CD4-positive, alpha-beta memory T cell (primary cell): ENCODE measurements at regions of chr1 and their contacts with region 1.

Region 1: DNA sequence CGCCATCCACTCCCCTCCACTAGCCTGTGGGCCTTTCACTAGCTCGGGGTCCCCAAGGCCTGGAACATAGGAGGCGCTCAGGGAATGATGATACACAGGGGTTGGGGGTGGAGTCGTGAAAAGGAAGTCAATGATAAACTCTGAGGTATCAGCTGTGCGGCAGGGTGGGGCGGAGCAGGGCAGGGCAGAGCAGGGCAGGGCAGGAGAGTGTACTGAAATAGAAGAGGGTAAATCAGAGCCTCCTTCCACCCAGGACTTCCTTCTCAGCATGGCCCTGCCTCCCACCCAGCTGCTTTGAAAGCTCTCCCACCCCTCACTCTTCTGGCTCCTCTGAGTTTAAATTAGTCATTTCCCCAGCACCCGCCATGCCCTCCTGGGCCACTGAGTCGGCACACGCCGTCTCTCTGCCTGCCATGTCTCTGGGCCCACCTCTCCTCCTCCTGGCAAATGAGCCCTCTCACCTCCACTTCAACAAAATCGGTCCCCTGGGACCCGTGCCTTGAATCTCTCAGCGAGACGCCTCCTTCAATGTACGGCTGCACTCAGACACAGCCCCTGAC is 16.9 kb downstream of the CAPZB start:
- DNase-seq: peak; percentile 65 to 86 (median 72)
- H3K4me3 ChIP-seq: peak overlapping the region; percentile 23 to 28
- H3K4me3 Mint-ChIP-seq: peak overlapping the region; percentile 71 to 87 (median 80)
- H3K27ac ChIP-seq: peak overlapping the region; percentile 59
- H3K27ac Mint-ChIP-seq: peak overlapping the region; percentile 86 to 97 (median 95)
- H3K4me1 ChIP-seq: peaks cover 97% of the 10 kb centered on the region
- H3K4me1 Mint-ChIP-seq: peaks cover 72 to 98% (median 86%) of the 10 kb centered on the region in 4 donors
- H3K27me3 ChIP-seq: no peaks in the 10 kb centered on the region
- H3K27me3 Mint-ChIP-seq: no peaks in the 10 kb centered on the region

Region 2: GRCh38 chr1:19390901-19391595 is 77.4 kb before region 1 on chr1:
- CTCF ChIA-PET with region 1: interaction called, 5 read pairs
- POLR2A ChIA-PET with region 1: interaction called, 9 read pairs
- intact Hi-C with region 1: loop called (anchors 2 kb)
- DNase-seq: peak; percentile 83 to 88 (median 86)
- H3K4me3 ChIP-seq: peak overlapping the region; percentile 34 to 46
- H3K4me3 Mint-ChIP-seq: peak overlapping the region; percentile 84 to 94 (median 87)
- H3K27ac ChIP-seq: peak overlapping the region; percentile 64
- H3K27ac Mint-ChIP-seq: peak overlapping the region; percentile 92 to 99 (median 96)
- H3K4me1 ChIP-seq: peaks cover 89% of the 10 kb centered on the region
- H3K4me1 Mint-ChIP-seq: peaks cover 56 to 95% (median 78%) of the 10 kb centered on the region in 4 donors
- H3K27me3 ChIP-seq: no peaks in the 10 kb centered on the region
- H3K27me3 Mint-ChIP-seq: no peaks in the 10 kb centered on the region

Region 3: GRCh38 chr1:19430121-19431068 is 38.1 kb before region 1 on chr1:
- CTCF ChIA-PET with region 1: interaction called, 4 read pairs
- POLR2A ChIA-PET with region 1: interaction called, 6 read pairs
- intact Hi-C with region 1: loop called (anchors 5 kb)
- DNase-seq: no peak
- H3K4me3 ChIP-seq: no peak overlapping the region
- H3K4me3 Mint-ChIP-seq: peak overlapping the region in 6 of 8 donors; percentile 13 to 65 (median 52)
- H3K27ac ChIP-seq: no peak overlapping the region
- H3K27ac Mint-ChIP-seq: peak overlapping the region; percentile 48 to 87 (median 79)
- H3K4me1 ChIP-seq: peaks cover 89% of the 10 kb centered on the region
- H3K4me1 Mint-ChIP-seq: peaks cover 65 to 89% (median 78%) of the 10 kb centered on the region in 4 donors
- H3K27me3 ChIP-seq: no peaks in the 10 kb centered on the region
- H3K27me3 Mint-ChIP-seq: no peaks in the 10 kb centered on the region